Activated CD8-positive, alpha-beta T cell treated with anti-CD3 and anti-CD28 coated beads, Interleukin-2, amount 10 ng/mL, durations not matched to agents 7 days and 5 days (primary cell): ENCODE measurements at regions of chr2 and their contacts with region 1.

Region 1: DNA sequence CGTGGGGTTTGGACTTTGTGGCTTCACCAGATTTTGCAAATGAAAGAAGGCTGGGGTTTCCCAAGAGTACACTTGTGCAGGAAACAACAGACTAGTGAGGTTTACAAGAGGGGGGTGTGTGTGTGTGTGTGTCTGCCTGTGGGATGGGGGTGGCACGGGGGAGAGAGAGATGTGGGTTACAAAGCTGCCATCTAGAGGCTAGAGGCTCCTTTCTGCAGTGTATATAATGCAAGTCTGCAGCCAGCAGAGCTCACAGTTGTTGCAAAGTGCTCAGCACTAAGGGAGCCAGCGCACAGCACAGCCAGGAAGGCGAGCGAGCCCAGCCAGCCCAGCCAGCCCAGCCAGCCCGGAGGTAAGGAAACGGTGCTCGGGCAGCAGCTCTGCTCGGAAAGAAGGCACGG is at the start of gene ACKR3:
- DNase-seq: peak; percentile 88
- ATAC-seq: peak; percentile 97
- H3K4me3 Mint-ChIP-seq: peak within 1 kb of the TSS; percentile 62
- H3K27ac Mint-ChIP-seq: peak within 1 kb of the TSS; percentile 34
- H3K4me1 Mint-ChIP-seq: peaks cover 34% of the 10 kb centered on the region
- H3K27me3 Mint-ChIP-seq: no peaks in the 10 kb centered on the region
- total RNA-seq, gene ACKR3: 3.6 TPM

Region 2: DNA sequence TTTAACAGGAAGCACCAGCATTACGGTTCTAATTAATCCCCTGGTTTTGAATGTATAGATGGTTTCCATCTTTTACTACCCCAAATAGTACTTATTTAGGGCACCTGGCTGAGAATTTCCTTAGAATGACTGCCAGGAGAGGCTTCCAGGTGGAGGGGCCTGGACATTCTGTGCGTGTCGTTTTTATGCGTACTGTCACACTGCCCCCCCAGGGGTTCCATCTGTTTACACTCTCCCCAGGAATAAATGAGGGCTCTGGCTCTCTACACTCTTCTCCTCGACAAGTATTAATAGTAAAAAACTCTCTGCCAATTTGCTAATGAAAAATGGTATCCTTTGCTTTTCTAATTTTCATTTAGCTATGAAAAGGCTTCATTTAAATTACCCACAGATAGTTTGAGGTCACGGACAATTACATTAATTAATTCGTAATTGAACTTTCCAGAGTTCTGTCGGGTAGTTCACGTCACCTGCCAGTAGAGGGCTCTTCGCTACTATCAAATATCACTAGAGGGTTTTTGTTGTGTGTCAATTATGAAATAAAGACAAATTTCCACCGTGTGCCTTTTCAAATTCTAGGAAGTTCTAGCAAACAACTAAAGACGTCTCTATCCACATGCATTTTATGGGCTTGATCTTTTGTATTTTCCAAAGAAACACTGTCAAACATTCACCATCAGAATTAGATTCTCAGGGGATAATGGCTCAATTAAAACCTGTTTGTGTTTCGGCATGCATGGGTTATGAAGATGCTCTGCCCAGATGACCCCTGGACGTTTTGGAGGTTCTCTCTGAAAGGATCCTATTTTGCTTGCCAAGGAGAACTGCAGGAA is 216.6 kb before region 1 on chr2:
- CTCF ChIA-PET with region 1: interaction called, 32 read pairs
- POLR2A ChIA-PET with region 1: no interaction called
- DNase-seq: peak; percentile 41
- ATAC-seq: no peak
- H3K4me3 Mint-ChIP-seq: no peak overlapping the region
- H3K27ac Mint-ChIP-seq: no peak overlapping the region
- H3K4me1 Mint-ChIP-seq: peaks cover 3% of the 10 kb centered on the region
- H3K27me3 Mint-ChIP-seq: no peaks in the 10 kb centered on the region

Region 3: GRCh38 chr2:236512902-236513435 is 56.6 kb before region 1 on chr2:
- CTCF ChIA-PET with region 1: interaction called, 347 read pairs
- POLR2A ChIA-PET with region 1: interaction called, 12 read pairs
- DNase-seq: peak; percentile 83
- ATAC-seq: peak; percentile 97
- H3K4me3 Mint-ChIP-seq: no peak overlapping the region
- H3K27ac Mint-ChIP-seq: no peak overlapping the region
- H3K4me1 Mint-ChIP-seq: peaks cover 6% of the 10 kb centered on the region
- H3K27me3 Mint-ChIP-seq: peaks cover 23% of the 10 kb centered on the region

Region 4: GRCh38 chr2:236536727-236537398 is 32.7 kb before region 1 on chr2:
- CTCF ChIA-PET with region 1: interaction called, 51 read pairs
- POLR2A ChIA-PET with region 1: interaction called, 5 read pairs
- DNase-seq: peak; percentile 78
- ATAC-seq: peak; percentile 95
- H3K4me3 Mint-ChIP-seq: peak overlapping the region; percentile 99
- H3K27ac Mint-ChIP-seq: peak overlapping the region; percentile 98
- H3K4me1 Mint-ChIP-seq: peaks cover 55% of the 10 kb centered on the region
- H3K27me3 Mint-ChIP-seq: no peaks in the 10 kb centered on the region

Region 5: GRCh38 chr2:236545814-236546480 is 23.6 kb before region 1 on chr2:
- CTCF ChIA-PET with region 1: interaction called, 37 read pairs
- POLR2A ChIA-PET with region 1: interaction called, 22 read pairs
- DNase-seq: peak; percentile 69
- ATAC-seq: peak; percentile 61
- H3K4me3 Mint-ChIP-seq: peak overlapping the region; percentile 75
- H3K27ac Mint-ChIP-seq: peak overlapping the region; percentile 90
- H3K4me1 Mint-ChIP-seq: peaks cover 92% of the 10 kb centered on the region
- H3K27me3 Mint-ChIP-seq: no peaks in the 10 kb centered on the region

Region 6: GRCh38 chr2:236558993-236559978 is 10.3 kb before region 1 on chr2:
- CTCF ChIA-PET with region 1: interaction called, 78 read pairs
- POLR2A ChIA-PET with region 1: no interaction called
- DNase-seq: no peak
- ATAC-seq: no peak
- H3K4me3 Mint-ChIP-seq: no peak overlapping the region
- H3K27ac Mint-ChIP-seq: no peak overlapping the region
- H3K4me1 Mint-ChIP-seq: peaks cover 44% of the 10 kb centered on the region
- H3K27me3 Mint-ChIP-seq: no peaks in the 10 kb centered on the region

Region 7: GRCh38 chr2:237026981-237027711 is 457.6 kb after region 1 on chr2:
- CTCF ChIA-PET with region 1: interaction called, 13 read pairs
- POLR2A ChIA-PET with region 1: no interaction called
- DNase-seq: peak; percentile 52
- ATAC-seq: peak; percentile 60
- H3K4me3 Mint-ChIP-seq: no peak overlapping the region
- H3K27ac Mint-ChIP-seq: no peak overlapping the region
- H3K4me1 Mint-ChIP-seq: no peaks in the 10 kb centered on the region
- H3K27me3 Mint-ChIP-seq: no peaks in the 10 kb centered on the region

Region 8: GRCh38 chr2:237092920-237093781 is 523.6 kb after region 1 on chr2:
- CTCF ChIA-PET with region 1: no interaction called
- POLR2A ChIA-PET with region 1: no interaction called
- DNase-seq: no peak
- ATAC-seq: no peak
- H3K4me3 Mint-ChIP-seq: no peak overlapping the region
- H3K27ac Mint-ChIP-seq: no peak overlapping the region
- H3K4me1 Mint-ChIP-seq: no peaks in the 10 kb centered on the region
- H3K27me3 Mint-ChIP-seq: no peaks in the 10 kb centered on the region